ENCODE measurements at regions of chr7 and their contacts with region 1.

Region 1: GRCh38 chr7:92833024-92833765 is 3.2 kb downstream of the CDK6 start:
- DNase-seq: peak; percentile 82
- ATAC-seq: peak; percentile 60
- H3K4me3 ChIP-seq: peak overlapping the region; percentile 82
- H3K27ac ChIP-seq: peak overlapping the region; percentile 66
- H3K4me1 ChIP-seq: peaks cover 31% of the 10 kb centered on the region
- H3K27me3 ChIP-seq: no peaks in the 10 kb centered on the region
- CTCF ChIP-seq: peak; percentile 79

Region 2: GRCh38 chr7:92598310-92598981 is 234.7 kb before region 1 on chr7:
- CTCF ChIA-PET with region 1: no interaction called
- POLR2A ChIA-PET with region 1: interaction called, 13 read pairs
- intact Hi-C with region 1: no loop called
- DNase-seq: no peak
- ATAC-seq: no peak
- H3K4me3 ChIP-seq: no peak overlapping the region
- H3K27ac ChIP-seq: no peak overlapping the region
- H3K4me1 ChIP-seq: peaks cover 12% of the 10 kb centered on the region
- H3K27me3 ChIP-seq: no peaks in the 10 kb centered on the region
- CTCF ChIP-seq: no peak

Region 3: GRCh38 chr7:92691578-92691977 is 141.6 kb before region 1 on chr7:
- CTCF ChIA-PET with region 1: interaction called, 7 read pairs
- POLR2A ChIA-PET with region 1: no interaction called
- intact Hi-C with region 1: loop called (anchors 1 kb)
- DNase-seq: peak; percentile 81
- ATAC-seq: peak; percentile 77
- H3K4me3 ChIP-seq: no peak overlapping the region
- H3K27ac ChIP-seq: no peak overlapping the region
- H3K4me1 ChIP-seq: peaks cover 14% of the 10 kb centered on the region
- H3K27me3 ChIP-seq: no peaks in the 10 kb centered on the region
- CTCF ChIP-seq: peak; percentile 81

Region 4: GRCh38 chr7:92768501-92769393 is 64.4 kb before region 1 on chr7:
- CTCF ChIA-PET with region 1: interaction called, 6 read pairs
- POLR2A ChIA-PET with region 1: interaction called, 4 read pairs
- intact Hi-C with region 1: loop called (anchors 1 kb)
- DNase-seq: peak; percentile 29
- ATAC-seq: no peak; the same call in 1 of the 2 replicates
- H3K4me3 ChIP-seq: no peak overlapping the region
- H3K27ac ChIP-seq: no peak overlapping the region
- H3K4me1 ChIP-seq: peaks cover 46% of the 10 kb centered on the region
- H3K27me3 ChIP-seq: no peaks in the 10 kb centered on the region
- CTCF ChIP-seq: no peak

Region 5: DNA sequence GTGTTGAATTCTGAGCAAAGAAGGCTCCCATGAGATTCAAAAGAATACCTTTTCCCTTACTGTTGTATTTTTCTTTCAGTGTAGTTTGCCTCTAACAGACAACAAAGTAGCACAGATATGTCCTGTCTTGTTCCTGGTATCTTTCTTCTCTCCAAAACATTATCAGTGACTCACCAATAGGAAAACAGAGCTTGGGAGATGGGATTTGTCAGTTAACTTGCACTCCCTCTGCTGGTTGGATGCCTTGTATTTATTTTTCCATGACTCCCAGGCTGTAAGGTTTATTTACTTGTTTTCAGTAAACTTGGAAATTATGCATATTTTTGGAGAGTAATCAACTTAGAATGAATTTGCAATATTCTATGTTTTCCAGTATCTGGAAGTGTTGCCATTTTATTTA is 154.9 kb after region 1 on chr7:
- CTCF ChIA-PET with region 1: interaction called, 11 read pairs
- POLR2A ChIA-PET with region 1: no interaction called
- intact Hi-C with region 1: loop called (anchors 1 kb)
- DNase-seq: peak; percentile 51
- ATAC-seq: peak; percentile 49
- H3K4me3 ChIP-seq: no peak overlapping the region
- H3K27ac ChIP-seq: no peak overlapping the region
- H3K4me1 ChIP-seq: no peaks in the 10 kb centered on the region
- H3K27me3 ChIP-seq: no peaks in the 10 kb centered on the region
- CTCF ChIP-seq: peak; percentile 75

Region 6: GRCh38 chr7:93231799-93232672 is 398.8 kb after region 1 on chr7 and contains the start of gene VPS50:
- CTCF ChIA-PET with region 1: interaction called, 5 read pairs
- POLR2A ChIA-PET with region 1: no interaction called
- intact Hi-C with region 1: loop called (anchors 10 kb)
- DNase-seq: peak; percentile 96
- ATAC-seq: peak; percentile 96
- H3K4me3 ChIP-seq: peak within 1 kb of the TSS; percentile 86
- H3K27ac ChIP-seq: peak within 1 kb of the TSS; percentile 78
- H3K4me1 ChIP-seq: peaks cover 22% of the 10 kb centered on the region
- H3K27me3 ChIP-seq: no peaks in the 10 kb centered on the region
- CTCF ChIP-seq: peak; percentile 34; the same call in 1 of the 2 replicates
- total RNA-seq, gene VPS50: 10.5 and 16.7 TPM in 2 replicates

Measured in PC-3 (cell line).